ENCODE measurements at regions of chr4 and their contacts with region 1.

Region 1: GRCh38 chr4:153573881-153574802 is 108.0 kb downstream of the TMEM131L start:
- DNase-seq: peak; percentile 67
- H3K4me3 ChIP-seq: no peak overlapping the region
- CTCF ChIP-seq: peak; percentile 79

Region 2: DNA sequence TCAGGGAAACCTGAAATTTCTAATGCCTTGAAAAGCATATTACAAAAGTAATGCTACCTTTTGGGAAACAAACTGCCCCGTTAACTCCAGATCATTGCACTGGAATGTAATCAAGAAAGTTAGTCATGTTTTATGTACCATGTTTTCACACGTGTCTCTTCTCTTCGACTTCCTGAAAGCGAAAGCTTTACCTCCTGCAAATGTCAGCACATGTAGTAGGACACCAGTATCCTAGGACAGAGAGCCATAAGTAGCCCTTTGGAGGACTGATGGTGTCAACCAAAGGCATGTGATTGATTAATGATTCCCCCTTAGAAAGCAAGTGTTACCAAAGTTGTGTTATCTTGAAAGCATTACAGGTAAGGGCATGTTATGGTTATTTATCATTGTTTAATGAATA is 238.5 kb before region 1 on chr4:
- CTCF ChIA-PET with region 1: interaction called, 199 read pairs
- POLR2A ChIA-PET with region 1: no interaction called
- DNase-seq: no peak
- H3K4me3 ChIP-seq: no peak overlapping the region
- CTCF ChIP-seq: no peak

Region 3: DNA sequence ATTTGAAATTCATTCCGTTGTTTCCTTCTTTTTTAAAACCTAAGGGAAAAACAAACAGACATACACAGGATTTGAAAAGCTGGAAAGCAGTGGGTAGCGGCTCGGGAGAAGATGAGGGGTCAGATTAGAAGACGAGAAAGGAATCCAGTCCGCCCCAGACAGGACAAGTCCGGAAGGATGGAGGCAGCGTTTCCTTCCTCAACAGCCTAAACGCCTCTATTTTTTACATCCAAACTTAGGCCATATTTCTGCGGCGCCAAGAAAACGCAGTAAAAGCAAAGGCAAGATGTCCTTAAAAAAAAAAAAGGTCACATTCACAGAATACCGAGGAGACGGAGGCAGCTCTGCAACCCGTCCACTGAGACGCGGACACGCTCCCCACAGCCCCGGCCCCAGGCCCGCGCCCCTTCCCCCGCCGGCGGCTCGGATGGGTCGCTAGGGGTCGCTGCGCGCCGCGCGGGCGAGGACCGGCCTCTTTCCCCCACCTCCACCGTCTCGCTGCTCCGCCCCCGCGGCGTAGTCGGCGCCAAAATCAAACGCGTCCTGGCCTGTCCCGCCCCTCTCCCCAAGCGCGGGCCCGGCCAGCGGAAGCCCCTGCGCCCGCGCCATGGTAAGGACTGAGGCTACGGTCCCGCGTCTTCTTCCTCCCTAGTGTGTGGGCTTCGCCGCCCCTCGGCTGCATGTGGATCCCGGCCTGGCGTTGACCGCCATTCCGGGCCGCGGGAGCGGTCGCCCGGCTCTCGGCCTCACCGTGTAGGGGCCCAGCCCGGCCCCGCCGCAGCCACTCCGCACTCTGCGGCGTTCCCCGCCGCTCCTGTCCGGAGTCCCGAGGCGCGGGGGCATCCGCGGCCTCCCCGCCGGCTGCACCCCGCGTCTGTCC is 229.8 kb before region 1 on chr4 and contains the start of gene MND1:
- CTCF ChIA-PET with region 1: interaction called, 199 read pairs
- POLR2A ChIA-PET with region 1: interaction called, 3 read pairs
- DNase-seq: no peak
- H3K4me3 ChIP-seq: peak within 1 kb of the TSS; percentile 83
- CTCF ChIP-seq: peak; percentile 81

Region 4: GRCh38 chr4:153432968-153433753 is 141.0 kb before region 1 on chr4:
- CTCF ChIA-PET with region 1: interaction called, 22 read pairs
- POLR2A ChIA-PET with region 1: interaction called, 4 read pairs
- DNase-seq: no peak
- H3K4me3 ChIP-seq: no peak overlapping the region
- CTCF ChIP-seq: peak; percentile 47

Region 5: GRCh38 chr4:153466081-153466948 is 107.8 kb before region 1 on chr4 and contains the start of gene TMEM131L:
- CTCF ChIA-PET with region 1: interaction called, 20 read pairs
- POLR2A ChIA-PET with region 1: no interaction called
- DNase-seq: no peak
- H3K4me3 ChIP-seq: peak within 1 kb of the TSS; percentile 80
- CTCF ChIP-seq: no peak

Region 6: DNA sequence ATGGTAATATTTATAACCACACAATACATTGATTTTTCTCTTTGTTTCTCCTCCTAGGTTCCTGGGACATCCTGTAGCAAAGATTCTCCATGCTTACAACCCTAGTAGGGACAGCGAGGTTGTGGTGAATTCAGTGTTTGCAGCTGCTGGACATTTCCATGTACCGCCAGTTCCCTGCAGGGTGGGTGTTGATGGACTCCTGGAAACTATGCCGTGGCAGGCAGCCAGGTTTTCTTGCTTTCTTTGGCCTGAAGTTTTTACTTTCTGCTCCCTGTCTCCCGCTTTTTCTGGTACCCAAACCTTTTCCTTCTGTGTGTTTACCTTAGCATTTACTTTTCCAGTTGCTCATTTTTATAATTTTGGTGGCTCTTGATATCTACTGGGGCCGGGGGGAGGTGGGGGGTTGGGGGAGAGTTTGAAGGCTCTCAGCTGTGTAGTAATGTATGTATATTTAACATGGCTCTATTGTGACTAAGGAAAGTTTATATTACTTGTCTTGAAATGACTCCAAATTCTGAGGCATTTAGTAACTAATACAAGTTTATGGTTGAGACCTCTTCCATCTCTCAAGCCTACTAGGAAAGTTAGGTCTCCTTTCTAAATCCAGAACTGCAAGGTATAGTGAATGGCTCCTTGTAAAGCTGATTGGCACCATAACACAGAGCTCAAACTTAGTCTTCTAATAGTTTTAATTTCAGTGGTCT is 18.3 kb before region 1 on chr4:
- CTCF ChIA-PET with region 1: interaction called, 16 read pairs
- POLR2A ChIA-PET with region 1: no interaction called
- DNase-seq: no peak
- H3K4me3 ChIP-seq: no peak overlapping the region
- CTCF ChIP-seq: no peak